Activated CD4-positive, alpha-beta memory T cell treated with anti-CD3 and anti-CD28 coated beads, Interleukin-2, amount 10 ng/mL, durations not matched to agents 7 days and 5 days (primary cell): ENCODE measurements at regions of chr4 and their contacts with region 1.

Region 1: DNA sequence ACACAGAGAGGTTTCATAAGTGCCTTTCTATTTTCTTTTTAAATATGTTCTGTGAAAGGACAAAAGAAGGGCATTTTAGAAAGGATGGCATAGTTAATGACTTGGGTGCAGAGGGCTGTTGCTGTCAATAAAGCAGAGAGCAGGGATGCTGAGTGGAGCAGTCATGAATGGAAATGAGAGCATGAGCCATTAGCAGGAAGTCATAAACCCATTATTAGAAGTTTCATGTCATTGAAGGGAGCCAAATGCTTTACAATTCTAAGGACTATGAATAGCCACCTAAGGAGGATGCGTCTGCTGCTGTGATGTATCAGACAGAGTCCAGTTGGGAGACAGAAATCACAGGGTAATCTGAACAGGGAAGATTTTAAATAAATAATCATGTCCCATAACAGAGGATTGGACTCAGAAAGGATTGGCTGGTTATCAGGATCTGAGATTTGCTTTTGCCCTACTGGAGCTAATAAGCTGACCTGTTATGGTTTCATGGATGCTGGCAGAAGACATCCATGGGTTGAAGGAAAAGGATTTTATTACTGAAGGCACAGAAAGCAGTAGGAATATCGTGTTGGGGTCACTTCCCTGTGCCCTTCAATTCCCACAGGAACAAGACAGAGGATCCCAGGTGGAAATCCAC is 47.5 kb upstream of the WDR19 start:
- DNase-seq: no peak
- H3K4me3 Mint-ChIP-seq: no peak overlapping the region
- H3K27ac Mint-ChIP-seq: no peak overlapping the region
- H3K4me1 Mint-ChIP-seq: peaks cover 15% of the 10 kb centered on the region
- H3K27me3 Mint-ChIP-seq: no peaks in the 10 kb centered on the region

Region 2: DNA sequence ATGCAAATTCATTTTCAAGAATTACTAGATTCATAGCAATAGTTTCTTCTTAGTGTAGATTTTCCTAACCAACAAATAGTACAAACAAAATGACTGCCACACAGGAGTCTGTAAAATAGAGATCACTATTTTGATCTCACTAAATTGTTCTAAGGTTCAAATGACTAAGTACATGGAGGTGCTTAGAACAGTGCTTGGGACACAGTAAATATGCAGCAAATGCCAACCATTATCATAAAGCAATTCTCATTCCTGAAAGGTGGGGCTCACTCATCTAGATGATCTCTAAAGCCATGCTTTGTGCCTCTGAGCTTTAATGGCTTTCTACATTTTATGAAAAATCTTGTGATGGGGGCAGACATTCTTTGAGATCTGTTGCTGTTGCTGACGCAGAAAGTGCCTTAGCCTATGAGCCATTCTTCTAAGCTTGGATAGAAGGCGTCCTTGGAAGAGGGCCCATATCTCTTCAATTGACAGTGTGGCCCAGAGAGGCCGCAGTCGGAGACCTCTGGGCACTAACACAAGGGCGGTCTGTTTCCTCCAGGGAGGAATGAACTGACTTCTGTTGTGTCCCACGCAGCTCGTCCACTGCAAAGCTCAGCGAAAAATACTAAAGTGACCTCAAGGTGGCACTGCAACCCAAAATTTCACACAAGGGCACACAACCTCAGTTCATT is 375.6 kb before region 1 on chr4:
- CTCF ChIA-PET with region 1: interaction called, 27 read pairs
- POLR2A ChIA-PET with region 1: no interaction called
- DNase-seq: peak; percentile 61
- H3K4me3 Mint-ChIP-seq: no peak overlapping the region
- H3K27ac Mint-ChIP-seq: no peak overlapping the region
- H3K4me1 Mint-ChIP-seq: peaks cover 21% of the 10 kb centered on the region
- H3K27me3 Mint-ChIP-seq: no peaks in the 10 kb centered on the region

Region 3: DNA sequence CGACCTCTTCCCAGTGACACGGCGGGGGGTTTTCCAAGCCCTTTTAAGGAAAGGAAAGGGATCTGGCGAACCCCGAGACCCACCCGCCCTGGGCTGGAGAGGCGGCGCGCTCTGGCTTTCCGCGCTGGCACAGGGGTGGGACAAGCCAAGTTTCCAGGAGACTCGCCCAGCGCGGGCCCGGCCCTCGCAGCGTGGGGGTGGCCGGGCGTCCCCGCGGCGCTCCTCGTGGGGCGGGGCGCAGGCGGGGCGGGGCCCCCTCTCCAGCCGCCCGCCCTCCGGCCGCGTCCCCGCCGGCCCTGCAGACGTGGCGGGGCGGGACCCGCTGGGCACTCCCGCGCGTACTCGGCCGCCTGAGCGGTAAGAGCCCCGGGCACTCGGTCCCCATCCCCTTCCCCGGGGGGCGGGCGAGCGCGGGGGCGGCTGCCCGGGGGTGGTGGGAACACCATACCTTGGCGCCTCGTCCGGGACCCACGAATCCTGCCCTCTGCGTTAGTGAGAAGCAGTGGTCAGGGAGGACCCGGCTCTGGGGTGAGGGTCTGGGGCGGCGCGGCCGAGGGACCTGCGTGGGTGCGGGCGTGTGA is 267.2 kb before region 1 on chr4 and contains the start of gene FAM114A1:
- CTCF ChIA-PET with region 1: no interaction called
- POLR2A ChIA-PET with region 1: no interaction called
- DNase-seq: no peak
- H3K4me3 Mint-ChIP-seq: peak within 1 kb of the TSS; percentile 67
- H3K27ac Mint-ChIP-seq: no peak within 1 kb of the TSS
- H3K4me1 Mint-ChIP-seq: peaks cover 17% of the 10 kb centered on the region
- H3K27me3 Mint-ChIP-seq: peaks cover 48% of the 10 kb centered on the region
- total RNA-seq, gene FAM114A1: 0.18 to 0.33 TPM

Region 4: DNA sequence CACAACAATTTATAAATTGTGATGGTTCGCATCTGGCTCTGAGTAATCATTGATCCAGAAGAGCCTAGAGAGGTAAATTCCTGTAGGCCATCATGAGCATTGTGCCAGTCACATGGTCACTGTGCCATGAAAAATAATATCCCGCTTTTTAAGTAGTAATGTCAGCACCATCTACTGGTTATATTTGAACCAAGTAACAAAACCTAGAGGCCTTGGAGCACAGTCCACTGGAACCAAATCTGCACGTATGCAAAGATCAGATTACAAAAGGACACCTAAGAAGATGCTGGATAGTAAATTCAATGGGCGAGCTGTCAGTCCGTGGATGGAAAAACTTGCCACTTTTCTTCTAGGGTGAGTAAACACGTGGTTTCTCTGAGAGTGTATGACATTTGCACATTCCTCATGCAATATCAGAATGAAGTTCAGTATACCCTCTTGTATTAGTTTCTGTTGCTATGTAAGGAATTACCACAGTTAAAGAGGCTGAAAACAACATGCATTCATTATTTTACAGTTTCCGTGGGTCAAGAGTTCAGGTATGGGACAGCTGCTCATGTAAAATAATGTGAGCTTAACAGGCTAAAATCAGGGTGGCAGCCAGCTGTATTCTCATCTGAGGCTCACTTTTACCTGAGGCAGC is 240.3 kb before region 1 on chr4:
- CTCF ChIA-PET with region 1: interaction called, 39 read pairs
- POLR2A ChIA-PET with region 1: no interaction called
- DNase-seq: no peak
- H3K4me3 Mint-ChIP-seq: no peak overlapping the region
- H3K27ac Mint-ChIP-seq: no peak overlapping the region
- H3K4me1 Mint-ChIP-seq: peaks cover 9% of the 10 kb centered on the region
- H3K27me3 Mint-ChIP-seq: peaks cover 10% of the 10 kb centered on the region

Region 5: GRCh38 chr4:38948551-38948950 is 186.2 kb before region 1 on chr4:
- CTCF ChIA-PET with region 1: interaction called, 10 read pairs
- POLR2A ChIA-PET with region 1: no interaction called
- DNase-seq: no peak
- H3K4me3 Mint-ChIP-seq: no peak overlapping the region
- H3K27ac Mint-ChIP-seq: no peak overlapping the region
- H3K4me1 Mint-ChIP-seq: peaks cover 37% of the 10 kb centered on the region
- H3K27me3 Mint-ChIP-seq: no peaks in the 10 kb centered on the region

Region 6: DNA sequence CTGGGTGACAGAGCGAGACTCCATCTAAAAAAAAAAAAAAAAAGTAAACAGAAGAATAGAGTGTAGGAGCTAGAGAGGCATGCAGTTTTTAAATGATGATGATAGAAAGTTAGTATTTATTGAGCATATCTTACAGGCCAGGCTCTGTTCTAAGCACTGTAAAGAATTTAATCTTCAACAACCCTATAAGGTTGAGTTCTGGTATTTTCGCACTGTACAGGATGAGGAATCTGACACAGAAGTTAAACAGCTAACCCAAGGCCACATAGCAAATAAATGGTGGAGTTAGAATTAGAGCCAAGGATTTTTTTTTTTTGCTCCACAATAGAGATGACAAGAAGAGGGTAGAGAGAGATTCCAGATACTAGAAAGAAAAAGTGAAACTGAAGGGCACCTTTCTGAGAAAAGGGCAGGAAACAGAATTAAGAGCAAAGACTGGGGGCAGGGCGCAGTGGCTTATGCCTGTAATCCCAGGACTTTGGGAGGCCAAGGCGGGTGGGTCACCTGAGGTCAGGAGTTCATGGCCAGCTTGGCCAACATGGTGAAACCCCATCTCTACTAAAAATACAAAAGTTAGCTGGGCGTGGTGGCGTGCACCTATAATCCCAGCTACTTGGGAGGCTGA is 16.7 kb before region 1 on chr4:
- CTCF ChIA-PET with region 1: interaction called, 13 read pairs
- POLR2A ChIA-PET with region 1: no interaction called
- DNase-seq: peak; percentile 59
- H3K4me3 Mint-ChIP-seq: peak overlapping the region; percentile 18
- H3K27ac Mint-ChIP-seq: peak overlapping the region; percentile 79
- H3K4me1 Mint-ChIP-seq: peaks cover 23% of the 10 kb centered on the region
- H3K27me3 Mint-ChIP-seq: no peaks in the 10 kb centered on the region

Region 7: DNA sequence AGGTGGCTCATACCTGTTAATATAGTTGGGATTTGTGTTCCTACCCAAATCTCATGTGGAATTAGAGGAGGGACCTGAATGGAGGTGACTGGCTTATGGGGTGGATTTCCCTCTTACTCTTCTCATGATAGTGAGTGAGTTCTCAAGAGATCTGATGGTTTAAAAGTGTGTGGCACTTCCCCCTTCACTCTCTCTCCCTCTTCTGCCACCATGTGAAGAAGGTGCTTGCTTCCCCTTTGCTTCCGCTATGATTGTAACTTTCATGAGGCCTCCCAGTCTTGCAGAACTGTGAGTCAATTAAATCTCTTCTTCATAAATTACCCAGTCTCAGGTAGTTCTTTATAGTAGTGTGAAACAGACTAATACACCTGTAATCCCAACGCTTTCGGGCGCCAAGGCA is 19.2 kb after region 1 on chr4:
- CTCF ChIA-PET with region 1: no interaction called
- POLR2A ChIA-PET with region 1: no interaction called
- DNase-seq: no peak
- H3K4me3 Mint-ChIP-seq: no peak overlapping the region
- H3K27ac Mint-ChIP-seq: no peak overlapping the region
- H3K4me1 Mint-ChIP-seq: peaks cover 4% of the 10 kb centered on the region
- H3K27me3 Mint-ChIP-seq: no peaks in the 10 kb centered on the region

Region 8: GRCh38 chr4:39259571-39260330 is 125.0 kb after region 1 on chr4:
- CTCF ChIA-PET with region 1: no interaction called
- POLR2A ChIA-PET with region 1: no interaction called
- DNase-seq: no peak
- H3K4me3 Mint-ChIP-seq: no peak overlapping the region
- H3K27ac Mint-ChIP-seq: no peak overlapping the region
- H3K4me1 Mint-ChIP-seq: no peaks in the 10 kb centered on the region
- H3K27me3 Mint-ChIP-seq: no peaks in the 10 kb centered on the region

Region 9: GRCh38 chr4:39375478-39375877 is 240.7 kb after region 1 on chr4:
- CTCF ChIA-PET with region 1: no interaction called
- POLR2A ChIA-PET with region 1: no interaction called
- DNase-seq: no peak
- H3K4me3 Mint-ChIP-seq: no peak overlapping the region
- H3K27ac Mint-ChIP-seq: no peak overlapping the region
- H3K4me1 Mint-ChIP-seq: no peaks in the 10 kb centered on the region
- H3K27me3 Mint-ChIP-seq: peaks cover 38% of the 10 kb centered on the region